Naive thymus-derived CD4-positive, alpha-beta T cell (primary cell): ENCODE measurements at regions of chr4 and their contacts with region 1.

Region 1: GRCh38 chr4:120718979-120719566 is 203.5 kb downstream of the PRDM5 start:
- DNase-seq: peak in 6 of 9 donors; percentile 6 to 40 (median 36)
- ATAC-seq: peak; percentile 82
- H3K4me3 ChIP-seq: no peak overlapping the region
- H3K4me3 Mint-ChIP-seq: no peak overlapping the region
- H3K27ac ChIP-seq: no peak overlapping the region
- H3K27ac Mint-ChIP-seq: no peak overlapping the region
- H3K4me1 ChIP-seq: no peaks in the 10 kb centered on the region
- H3K4me1 Mint-ChIP-seq: peaks cover 0 to 2% (median 0%) of the 10 kb centered on the region in 7 donors
- H3K27me3 ChIP-seq: no peaks in the 10 kb centered on the region
- H3K27me3 Mint-ChIP-seq: peaks cover 0 to 16% (median 0%) of the 10 kb centered on the region in 5 donors

Region 2: GRCh38 chr4:120922381-120923206 is 203.5 kb after region 1 on chr4 and contains the start of gene PRDM5:
- CTCF ChIA-PET with region 1: no interaction called
- POLR2A ChIA-PET with region 1: no interaction called
- intact Hi-C with region 1: loop called in 1 of 2 experiments (anchors 5 kb)
- DNase-seq: peak; percentile 6 to 37 (median 22)
- ATAC-seq: peak; percentile 67
- H3K4me3 ChIP-seq: peak within 1 kb of the TSS; percentile 72
- H3K4me3 Mint-ChIP-seq: peak within 1 kb of the TSS; percentile 82 to 98 (median 96)
- H3K27ac ChIP-seq: peak within 1 kb of the TSS; percentile 18
- H3K27ac Mint-ChIP-seq: peak within 1 kb of the TSS in 8 of 9 donors; percentile 75 to 93 (median 82)
- H3K4me1 ChIP-seq: peaks cover 0 to 5% of the 10 kb centered on the region in 2 donors
- H3K4me1 Mint-ChIP-seq: peaks cover 8 to 16% (median 13%) of the 10 kb centered on the region in 7 donors
- H3K27me3 ChIP-seq: no peaks in the 10 kb centered on the region
- H3K27me3 Mint-ChIP-seq: peaks cover 0 to 69% (median 0%) of the 10 kb centered on the region in 5 donors
- total RNA-seq, gene PRDM5: 0.29 to 1.1 (median 0.72) TPM in 4 of 5 experiments, not detected in the other

Region 3: GRCh38 chr4:120977435-120977997 is 258.4 kb after region 1 on chr4:
- CTCF ChIA-PET with region 1: interaction called, 3 read pairs
- POLR2A ChIA-PET with region 1: no interaction called
- intact Hi-C with region 1: loop called in 1 of 2 experiments (anchors 1 kb)
- DNase-seq: peak in 6 of 9 donors; percentile 6 to 32 (median 26)
- ATAC-seq: peak; percentile 66
- H3K4me3 ChIP-seq: no peak overlapping the region
- H3K4me3 Mint-ChIP-seq: no peak overlapping the region
- H3K27ac ChIP-seq: no peak overlapping the region
- H3K27ac Mint-ChIP-seq: no peak overlapping the region
- H3K4me1 ChIP-seq: no peaks in the 10 kb centered on the region
- H3K4me1 Mint-ChIP-seq: peaks cover 0 to 6% (median 0%) of the 10 kb centered on the region in 7 donors
- H3K27me3 ChIP-seq: no peaks in the 10 kb centered on the region
- H3K27me3 Mint-ChIP-seq: peaks cover 0 to 6% (median 0%) of the 10 kb centered on the region in 5 donors

Region 4: GRCh38 chr4:121307445-121308327 is 588.6 kb after region 1 on chr4:
- CTCF ChIA-PET with region 1: no interaction called
- POLR2A ChIA-PET with region 1: no interaction called
- intact Hi-C with region 1: loop called (anchors 1 to 2 kb)
- DNase-seq: peak in 7 of 9 donors; percentile 10 to 52 (median 33)
- ATAC-seq: peak; percentile 70
- H3K4me3 ChIP-seq: no peak overlapping the region
- H3K4me3 Mint-ChIP-seq: no peak overlapping the region
- H3K27ac ChIP-seq: no peak overlapping the region
- H3K27ac Mint-ChIP-seq: peak overlapping the region in 1 of 9 donors; percentile 39
- H3K4me1 ChIP-seq: peaks cover 0 to 9% of the 10 kb centered on the region in 2 donors
- H3K4me1 Mint-ChIP-seq: peaks cover 3 to 19% (median 15%) of the 10 kb centered on the region in 7 donors
- H3K27me3 ChIP-seq: no peaks in the 10 kb centered on the region
- H3K27me3 Mint-ChIP-seq: peaks cover 0 to 17% (median 0%) of the 10 kb centered on the region in 5 donors